ENCODE measurements at regions of chr1 and their contacts with region 1.

Region 1: DNA sequence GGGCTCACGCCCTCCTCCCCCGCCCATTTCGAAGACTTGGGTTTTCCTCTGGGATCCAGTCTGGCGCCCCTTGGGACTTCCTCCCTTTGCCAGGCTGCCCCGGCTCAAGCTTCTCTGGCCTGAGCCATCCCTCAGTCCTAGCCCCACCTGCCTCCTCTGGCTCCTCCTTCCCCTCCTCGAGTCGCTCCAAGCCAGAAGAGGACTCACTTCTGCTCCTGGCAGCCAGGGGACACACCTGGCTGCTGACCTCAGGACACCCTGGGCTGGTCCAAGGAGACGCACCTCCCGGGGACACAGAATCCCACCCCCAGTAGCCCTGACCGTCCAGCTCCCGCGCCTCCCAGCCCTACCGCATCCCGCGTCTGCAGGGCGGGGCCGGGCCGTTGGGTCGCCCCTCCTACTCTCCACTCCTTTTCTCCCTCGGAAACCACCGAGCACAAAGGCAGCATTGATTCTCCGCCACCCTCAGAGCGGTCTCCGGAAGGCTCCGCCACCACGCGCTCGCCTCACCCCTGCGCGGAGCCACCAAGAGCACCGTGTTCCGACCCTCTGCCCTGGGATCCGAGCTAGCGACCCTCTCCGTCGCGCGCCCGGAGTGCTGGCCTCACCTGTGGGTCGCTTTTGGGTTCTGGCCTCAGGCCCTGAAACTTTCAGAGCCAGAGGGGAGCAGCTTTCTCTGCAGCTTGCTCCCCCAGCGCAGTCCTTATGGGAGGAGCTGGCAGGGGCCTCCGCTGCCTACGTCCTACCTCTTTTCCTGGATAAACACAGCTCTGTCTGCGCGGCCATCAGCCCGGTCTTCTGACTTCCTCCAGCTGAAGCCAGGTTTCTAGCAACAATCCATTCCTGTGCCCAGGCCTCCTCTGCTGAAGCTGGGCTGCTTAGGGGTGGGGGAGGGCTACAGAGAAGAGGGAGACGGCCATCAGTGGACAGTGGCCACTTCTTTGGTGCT is at the start of gene C2CD4D:
- DNase-seq: peak in 1 of 5 donors; percentile 31
- ATAC-seq: peak in 3 of 4 donors; percentile 43 to 52 (median 51)
- H3K4me3 ChIP-seq: peak within 1 kb of the TSS; percentile 31 to 60 (median 50)
- H3K27ac ChIP-seq: peak within 1 kb of the TSS in 5 of 12 donors; percentile 34 to 68 (median 49)
- H3K4me1 ChIP-seq: peaks cover 0 to 29% (median 19%) of the 10 kb centered on the region in 12 donors
- H3K27me3 ChIP-seq: peaks cover 16 to 46% (median 29%) of the 10 kb centered on the region in 9 donors
- CTCF ChIP-seq: no peak
- POLR2A ChIP-seq: no peak
- total RNA-seq, gene C2CD4D: 0.14 to 0.28 TPM in 2 of 9 donors, not detected in the others

Region 2: GRCh38 chr1:151443846-151444782 is 395.6 kb before region 1 on chr1:
- intact Hi-C with region 1: loop called in 2 of 10 experiments (anchors 10 kb)
- DNase-seq: peak in 3 of 5 donors; percentile 29 to 47 (median 39)
- ATAC-seq: peak; percentile 57 to 88 (median 84)
- H3K4me3 ChIP-seq: no peak overlapping the region
- H3K27ac ChIP-seq: peak overlapping the region in 3 of 12 donors; percentile 5 to 46 (median 42)
- H3K4me1 ChIP-seq: peaks cover 0 to 51% (median 33%) of the 10 kb centered on the region in 12 donors
- H3K27me3 ChIP-seq: no peaks in the 10 kb centered on the region
- CTCF ChIP-seq: peak; percentile 47 to 83 (median 70)
- POLR2A ChIP-seq: no peak

Region 3: DNA sequence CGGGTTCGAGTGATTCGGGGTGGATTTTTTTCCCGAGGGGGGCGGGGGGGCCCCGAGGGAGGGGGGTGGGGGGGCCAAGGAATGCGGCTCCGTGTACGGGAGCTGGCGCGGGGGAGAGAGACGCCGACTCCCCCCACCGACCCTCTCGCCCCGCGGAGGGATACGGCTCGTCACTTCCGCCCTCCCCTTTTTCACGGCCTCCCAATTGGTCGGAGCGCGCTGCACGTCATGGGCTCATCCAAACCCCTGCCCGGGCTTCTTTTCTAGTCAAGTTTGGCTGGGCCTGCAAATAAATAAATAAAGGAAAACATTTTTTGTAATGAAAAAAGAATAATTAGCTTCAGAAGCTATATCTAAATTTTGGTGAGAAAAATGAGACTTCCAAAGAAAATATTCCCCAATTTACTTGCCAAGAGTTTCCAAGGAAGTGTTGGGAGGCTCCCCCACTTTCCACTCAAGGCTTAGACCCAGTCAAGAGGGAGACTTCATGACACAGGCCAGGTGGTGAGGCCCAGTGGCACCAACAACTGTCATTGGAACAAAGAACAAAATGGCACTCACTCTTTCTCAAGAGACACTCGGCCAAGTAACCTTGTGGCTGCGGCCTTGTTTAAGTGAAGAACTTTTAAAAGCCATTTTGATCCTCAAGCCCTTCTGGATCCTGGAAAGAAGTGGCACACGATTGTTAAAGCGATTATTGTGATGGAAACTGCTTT is 380.2 kb before region 1 on chr1 and contains the start of gene POGZ:
- intact Hi-C with region 1: loop called in 1 of 10 experiments (anchors 10 kb)
- DNase-seq: peak; percentile 98 to 99 (median 98)
- ATAC-seq: peak; percentile 95 to 97 (median 96)
- H3K4me3 ChIP-seq: peak within 1 kb of the TSS; percentile 60 to 89 (median 79)
- H3K27ac ChIP-seq: peak within 1 kb of the TSS; percentile 90 to 99 (median 97)
- H3K4me1 ChIP-seq: peaks cover 0 to 36% (median 23%) of the 10 kb centered on the region in 12 donors
- H3K27me3 ChIP-seq: peaks cover 0 to 6% (median 0%) of the 10 kb centered on the region in 9 donors
- CTCF ChIP-seq: no peak
- POLR2A ChIP-seq: no peak
- total RNA-seq, gene POGZ: 26.0 to 64.3 (median 35.5) TPM

Region 4: DNA sequence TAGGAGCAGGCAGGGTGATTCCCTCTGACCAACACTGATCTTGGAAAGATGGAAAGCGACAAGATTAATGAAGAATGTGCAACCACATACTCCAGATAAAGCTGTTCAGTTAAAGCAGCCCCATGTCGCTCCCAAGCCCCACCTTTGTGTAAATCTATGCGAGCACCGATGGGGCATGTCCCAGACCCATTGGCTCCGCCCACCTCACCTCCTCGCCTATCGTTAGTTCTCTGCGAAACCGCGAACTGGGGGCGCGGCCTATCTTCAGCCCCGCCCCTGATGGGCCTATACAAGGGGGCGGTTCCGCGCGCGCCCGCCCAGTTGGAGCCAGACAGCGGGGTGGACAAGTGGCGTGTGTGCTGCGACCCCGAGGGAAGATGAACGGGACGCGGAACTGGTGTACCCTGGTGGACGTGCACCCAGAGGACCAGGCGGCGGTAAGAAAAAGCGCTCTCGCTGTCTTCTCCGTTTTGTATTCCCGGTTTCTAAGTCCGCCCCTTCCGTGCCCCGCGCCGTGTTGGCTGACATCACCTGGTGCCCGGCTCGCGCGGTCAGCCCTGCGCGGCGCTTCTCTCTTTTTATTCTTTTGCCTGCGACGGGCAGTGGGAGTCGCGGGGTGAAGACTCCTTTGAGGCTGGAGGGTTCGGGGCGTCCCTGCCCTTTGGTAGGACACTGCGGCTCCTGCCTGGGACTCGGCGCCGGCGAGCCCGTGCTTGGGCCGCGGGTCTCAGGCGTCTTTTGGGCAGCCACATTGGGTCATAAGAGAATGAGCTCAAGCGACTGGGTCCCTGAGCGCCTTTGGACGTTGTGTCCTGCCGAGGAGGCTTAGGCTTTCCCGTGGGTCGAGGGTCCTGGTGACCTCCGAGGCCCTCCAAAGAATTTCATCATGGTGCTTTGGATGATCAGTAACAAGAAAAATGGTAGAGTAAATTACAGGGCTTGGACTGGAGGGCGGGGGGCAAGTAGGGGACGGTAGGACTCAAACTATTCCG is 299.4 kb before region 1 on chr1 and contains the start of gene TUFT1:
- intact Hi-C with region 1: loop called in 4 of 10 experiments (anchors 10 kb)
- DNase-seq: peak; percentile 89 to 94 (median 94)
- ATAC-seq: peak; percentile 96 to 98 (median 98)
- H3K4me3 ChIP-seq: peak within 1 kb of the TSS; percentile 38 to 82 (median 76)
- H3K27ac ChIP-seq: peak within 1 kb of the TSS in 10 of 12 donors; percentile 28 to 86 (median 62)
- H3K4me1 ChIP-seq: peaks cover 0 to 21% (median 12%) of the 10 kb centered on the region in 12 donors
- H3K27me3 ChIP-seq: no peaks in the 10 kb centered on the region
- CTCF ChIP-seq: no peak
- POLR2A ChIP-seq: peak; percentile 83 to 88
- total RNA-seq, gene TUFT1: 2.1 to 13.6 (median 4.3) TPM

Region 5: GRCh38 chr1:151594143-151594625 is 245.5 kb before region 1 on chr1:
- intact Hi-C with region 1: loop called in 8 of 10 experiments (anchors 2 to 10 kb)
- DNase-seq: peak; percentile 60 to 84 (median 71)
- ATAC-seq: peak in 3 of 4 donors; percentile 61 to 67 (median 62)
- H3K4me3 ChIP-seq: peak overlapping the region in 3 of 12 donors; percentile 5 to 18 (median 13)
- H3K27ac ChIP-seq: no peak overlapping the region
- H3K4me1 ChIP-seq: peaks cover 0 to 7% (median 0%) of the 10 kb centered on the region in 12 donors
- H3K27me3 ChIP-seq: peaks cover 0 to 5% (median 0%) of the 10 kb centered on the region in 9 donors
- CTCF ChIP-seq: peak; percentile 79 to 94 (median 88)
- POLR2A ChIP-seq: no peak

Region 6: DNA sequence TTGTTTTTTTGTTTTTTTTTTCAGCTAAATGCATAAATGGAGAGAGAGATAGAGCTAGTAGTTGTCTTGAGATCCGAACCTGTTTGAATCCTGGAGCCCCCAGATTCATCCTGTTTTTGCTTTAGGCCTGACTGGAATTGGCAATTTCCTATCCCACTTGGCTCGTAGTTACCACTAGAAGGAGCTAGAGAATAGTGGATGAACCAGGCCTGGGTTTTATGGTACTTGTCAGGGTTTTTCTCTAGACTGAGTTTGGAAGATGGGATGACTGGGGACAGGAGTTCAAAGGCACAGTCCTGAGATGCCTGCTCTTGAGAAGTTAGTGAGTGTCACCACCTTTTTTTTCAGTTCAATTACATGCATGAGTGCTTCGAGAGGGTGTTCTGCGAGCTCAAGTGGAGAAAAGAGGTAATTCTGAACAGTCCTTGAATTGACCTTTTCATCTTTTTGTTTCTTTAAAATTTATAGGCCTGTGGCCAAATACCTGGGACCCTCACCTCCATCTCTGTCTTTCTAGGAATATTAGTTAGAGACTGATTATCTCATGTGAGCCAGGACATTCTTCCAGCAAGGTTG is 146.6 kb before region 1 on chr1:
- intact Hi-C with region 1: loop called in 1 of 10 experiments (anchors 2 kb)
- DNase-seq: no peak
- ATAC-seq: peak in 2 of 4 donors; percentile 38 to 43
- H3K4me3 ChIP-seq: no peak overlapping the region
- H3K27ac ChIP-seq: no peak overlapping the region
- H3K4me1 ChIP-seq: peaks cover 0 to 13% (median 0%) of the 10 kb centered on the region in 12 donors
- H3K27me3 ChIP-seq: no peaks in the 10 kb centered on the region
- CTCF ChIP-seq: peak; percentile 17 to 61 (median 45)
- POLR2A ChIP-seq: no peak

Region 7: DNA sequence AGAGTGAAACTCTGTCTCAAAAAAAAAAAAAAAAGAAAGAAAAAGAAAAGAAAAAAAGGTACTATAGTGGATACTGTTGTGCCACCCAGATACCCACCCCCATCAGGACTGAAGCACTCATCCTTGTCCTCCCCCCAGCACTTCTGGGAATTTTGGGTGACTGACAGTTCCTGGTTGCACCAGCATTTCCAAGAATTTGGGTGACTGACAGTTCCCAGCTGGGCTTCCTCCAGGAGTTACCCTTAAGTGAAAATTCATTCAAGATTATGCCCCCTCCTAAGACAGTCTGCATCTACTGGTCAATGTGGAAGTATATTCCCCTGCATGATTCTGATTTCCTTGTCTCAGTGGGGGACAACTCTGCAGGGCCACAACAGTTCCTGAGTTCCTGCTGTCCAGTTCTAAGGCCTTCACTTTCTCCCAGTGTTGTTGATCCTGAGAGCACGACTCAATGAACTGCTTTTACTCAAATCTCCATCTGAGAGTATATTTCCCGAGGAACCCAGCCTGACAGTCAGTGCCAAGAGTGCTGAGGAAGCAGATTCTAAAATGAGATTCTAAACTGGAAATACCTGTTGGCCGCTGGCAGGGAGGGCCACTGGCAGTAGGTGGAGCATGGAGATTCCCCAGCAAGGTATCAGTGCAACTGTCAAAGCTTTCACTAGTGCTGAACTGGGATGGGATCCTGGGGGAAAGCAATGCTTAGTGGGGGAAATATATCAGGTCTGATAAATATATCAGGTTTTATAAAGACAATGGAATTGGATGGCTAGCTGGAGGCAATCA is 99.9 kb before region 1 on chr1:
- intact Hi-C with region 1: loop called in 1 of 10 experiments (anchors 5 kb)
- DNase-seq: no peak
- ATAC-seq: no peak
- H3K4me3 ChIP-seq: no peak overlapping the region
- H3K27ac ChIP-seq: no peak overlapping the region
- H3K4me1 ChIP-seq: no peaks in the 10 kb centered on the region
- H3K27me3 ChIP-seq: no peaks in the 10 kb centered on the region
- CTCF ChIP-seq: no peak
- POLR2A ChIP-seq: no peak